Activated naive CD4-positive, alpha-beta T cell treated with anti-CD3 and anti-CD28 coated beads for 36 hours (primary cell): ENCODE measurements at regions of chr17 and their contacts with region 1.

Region 1: DNA sequence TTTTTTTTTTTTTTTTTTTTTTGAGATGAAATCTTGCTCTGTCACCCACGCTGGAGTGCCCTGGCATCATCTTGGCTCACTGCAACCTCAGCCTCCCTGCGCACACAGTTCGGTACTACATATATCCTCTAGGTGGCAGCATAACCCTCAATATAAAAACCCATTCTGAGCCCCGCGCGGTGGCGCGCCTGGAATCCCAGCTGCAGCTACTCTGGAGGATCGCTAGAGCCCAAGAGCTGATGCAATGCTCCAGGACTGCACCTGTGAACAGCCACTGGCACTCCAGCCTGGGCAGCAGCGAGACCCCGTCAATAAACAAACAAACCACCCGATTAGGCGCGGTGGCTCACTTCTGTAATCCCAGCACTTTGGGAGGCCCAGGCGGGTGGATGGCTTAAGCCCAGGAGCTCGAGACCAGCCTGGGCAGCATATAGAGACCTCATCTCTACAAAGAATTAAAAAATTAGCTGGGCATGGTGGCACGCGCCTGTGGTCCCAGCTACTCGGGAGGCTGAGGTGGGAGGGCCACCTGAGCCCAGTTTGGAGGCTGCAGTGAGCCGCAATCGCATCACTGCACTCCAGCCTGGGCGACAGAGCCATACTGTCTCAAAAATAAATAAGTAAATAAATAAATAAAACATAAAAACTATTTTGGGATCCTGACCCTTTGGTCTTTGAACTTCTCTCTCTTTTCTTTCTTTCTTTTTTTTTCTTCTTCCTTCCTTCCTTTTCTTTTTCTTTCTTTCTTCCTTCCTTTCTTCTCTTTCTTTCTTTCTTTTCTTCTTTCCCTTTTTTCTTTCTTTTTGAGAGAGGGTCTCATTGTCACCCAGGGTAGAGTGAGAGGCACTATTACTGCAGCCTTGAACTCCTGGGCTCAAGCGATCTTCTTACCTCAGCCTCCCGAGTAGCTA is 15.4 kb upstream of the AKAP10 start:
- DNase-seq: peak; percentile 84
- H3K4me3 Mint-ChIP-seq: peak overlapping the region; percentile 26
- H3K27ac Mint-ChIP-seq: peak overlapping the region; percentile 19
- H3K4me1 Mint-ChIP-seq: peaks cover 8% of the 10 kb centered on the region
- H3K27me3 Mint-ChIP-seq: peaks cover 3% of the 10 kb centered on the region

Region 2: DNA sequence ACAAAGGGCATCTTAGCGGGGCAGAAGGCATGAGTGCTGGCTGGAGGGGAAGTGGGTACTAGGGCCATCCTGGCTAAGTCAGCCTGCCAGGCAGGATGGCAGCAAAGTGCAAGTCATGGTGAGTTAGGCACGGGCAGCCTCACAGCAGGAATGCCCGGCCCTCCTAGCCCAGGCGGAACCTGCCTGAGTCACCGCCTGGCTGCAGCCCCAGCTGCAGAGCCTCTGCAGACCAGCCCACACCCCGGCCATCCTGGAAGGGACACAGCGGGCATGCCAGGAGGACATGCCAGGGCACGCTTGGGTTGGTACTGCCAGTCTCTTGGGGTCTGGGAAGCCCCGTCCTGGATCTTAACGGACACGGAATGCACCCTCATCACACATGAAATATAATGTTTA is 240.0 kb before region 1 on chr17:
- CTCF ChIA-PET with region 1: no interaction called
- intact Hi-C with region 1: no loop called
- DNase-seq: no peak
- H3K4me3 Mint-ChIP-seq: no peak overlapping the region
- H3K27ac Mint-ChIP-seq: no peak overlapping the region
- H3K4me1 Mint-ChIP-seq: peaks cover 6% of the 10 kb centered on the region
- H3K27me3 Mint-ChIP-seq: peaks cover 4% of the 10 kb centered on the region

Region 3: GRCh38 chr17:20009302-20010098 is 16.4 kb after region 1 on chr17 and contains the start of gene SPECC1:
- CTCF ChIA-PET with region 1: interaction called, 6 read pairs
- intact Hi-C with region 1: loop called (anchors 1 kb)
- DNase-seq: peak; percentile 87
- H3K4me3 Mint-ChIP-seq: peak within 1 kb of the TSS; percentile 82
- H3K27ac Mint-ChIP-seq: no peak within 1 kb of the TSS
- H3K4me1 Mint-ChIP-seq: peaks cover 8% of the 10 kb centered on the region
- H3K27me3 Mint-ChIP-seq: peaks cover 49% of the 10 kb centered on the region
- total RNA-seq, gene SPECC1: 13.7 to 17.4 TPM

Region 4: GRCh38 chr17:20066253-20066652 is 73.2 kb after region 1 on chr17:
- CTCF ChIA-PET with region 1: no interaction called
- intact Hi-C with region 1: no loop called
- DNase-seq: no peak
- H3K4me3 Mint-ChIP-seq: no peak overlapping the region
- H3K27ac Mint-ChIP-seq: no peak overlapping the region
- H3K4me1 Mint-ChIP-seq: peaks cover 13% of the 10 kb centered on the region
- H3K27me3 Mint-ChIP-seq: no peaks in the 10 kb centered on the region

Region 5: GRCh38 chr17:20114466-20114865 is 121.4 kb after region 1 on chr17:
- CTCF ChIA-PET with region 1: interaction called, 34 read pairs
- intact Hi-C with region 1: loop called (anchors 1 kb)
- DNase-seq: no peak
- H3K4me3 Mint-ChIP-seq: no peak overlapping the region
- H3K27ac Mint-ChIP-seq: no peak overlapping the region
- H3K4me1 Mint-ChIP-seq: no peaks in the 10 kb centered on the region
- H3K27me3 Mint-ChIP-seq: peaks cover 2% of the 10 kb centered on the region

Region 6: DNA sequence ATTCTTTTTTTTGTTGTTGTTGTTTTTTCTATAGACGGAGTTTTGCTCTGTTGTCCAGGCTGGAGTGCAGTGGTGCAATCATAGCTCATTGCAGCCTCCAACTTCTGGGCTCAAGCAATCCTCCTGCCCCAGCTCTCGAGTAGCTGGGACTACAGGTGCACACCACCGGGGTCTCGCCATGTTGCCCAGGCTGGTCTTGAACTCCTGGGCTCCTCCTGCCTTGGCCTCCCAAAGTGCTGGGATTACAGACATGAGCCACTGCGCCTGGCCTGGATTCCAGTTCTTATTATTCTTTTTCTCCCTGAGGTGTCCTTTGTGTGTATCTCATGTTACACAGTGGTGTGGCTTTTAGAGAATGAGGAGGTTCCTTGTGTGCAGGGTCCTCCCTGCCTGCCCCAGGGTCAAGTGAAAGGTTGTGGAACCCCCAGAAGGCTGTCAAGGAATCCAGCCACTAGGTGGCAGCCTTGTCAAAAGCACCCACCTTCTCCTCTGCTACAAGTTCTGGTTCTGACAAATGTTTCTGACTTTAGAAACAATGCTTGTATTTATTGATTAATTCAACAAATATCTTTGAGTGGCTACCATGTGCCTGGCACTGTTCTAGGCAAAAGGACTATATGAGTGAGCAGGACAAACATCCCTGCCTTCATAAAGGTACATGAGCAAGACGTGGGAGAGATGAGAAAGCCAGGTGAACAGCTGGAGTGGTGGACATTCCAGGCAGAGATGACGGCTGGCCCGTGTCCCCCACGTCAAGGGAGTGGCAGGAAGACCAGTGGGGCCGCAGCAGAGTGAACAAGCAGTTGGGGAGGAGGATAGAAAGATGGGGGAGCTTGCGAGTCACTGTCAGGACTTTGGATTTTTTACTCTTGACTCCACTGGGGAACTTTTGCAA is 128.5 kb after region 1 on chr17:
- CTCF ChIA-PET with region 1: interaction called, 34 read pairs
- intact Hi-C with region 1: loop called (anchors 1 kb)
- DNase-seq: peak; percentile 80
- H3K4me3 Mint-ChIP-seq: no peak overlapping the region
- H3K27ac Mint-ChIP-seq: no peak overlapping the region
- H3K4me1 Mint-ChIP-seq: no peaks in the 10 kb centered on the region
- H3K27me3 Mint-ChIP-seq: no peaks in the 10 kb centered on the region

Region 7: GRCh38 chr17:20315821-20316220 is 322.8 kb after region 1 on chr17:
- CTCF ChIA-PET with region 1: no interaction called
- intact Hi-C with region 1: loop called (anchors 1 kb)
- DNase-seq: no peak
- H3K4me3 Mint-ChIP-seq: no peak overlapping the region
- H3K27ac Mint-ChIP-seq: no peak overlapping the region
- H3K4me1 Mint-ChIP-seq: peaks cover under 1% of the 10 kb centered on the region
- H3K27me3 Mint-ChIP-seq: no peaks in the 10 kb centered on the region